Lower lobe of right lung (tissue), 2 donors: ENCODE measurements at regions of chr15 and their contacts with region 1.

Region 1: GRCh38 chr15:49122541-49123062 is 32.8 kb downstream of the COPS2 start:
- DNase-seq: no peak
- ATAC-seq: peak; percentile 34 to 51
- H3K4me3 ChIP-seq: no peak overlapping the region
- H3K27ac ChIP-seq: no peak overlapping the region
- H3K4me1 ChIP-seq: no peaks in the 10 kb centered on the region
- H3K27me3 ChIP-seq: no peaks in the 10 kb centered on the region
- CTCF ChIP-seq: no peak

Region 2: GRCh38 chr15:48963524-48964113 is 159.0 kb before region 1 on chr15 and contains the start of gene SHC4:
- intact Hi-C with region 1: no loop called
- DNase-seq: no peak
- ATAC-seq: peak; percentile 61 to 69
- H3K4me3 ChIP-seq: peak within 1 kb of the TSS; percentile 55
- H3K27ac ChIP-seq: no peak within 1 kb of the TSS
- H3K4me1 ChIP-seq: peaks cover 23% of the 10 kb centered on the region
- H3K27me3 ChIP-seq: peaks cover 32% of the 10 kb centered on the region
- CTCF ChIP-seq: no peak
- total RNA-seq, gene SHC4: 0.68 TPM

Region 3: DNA sequence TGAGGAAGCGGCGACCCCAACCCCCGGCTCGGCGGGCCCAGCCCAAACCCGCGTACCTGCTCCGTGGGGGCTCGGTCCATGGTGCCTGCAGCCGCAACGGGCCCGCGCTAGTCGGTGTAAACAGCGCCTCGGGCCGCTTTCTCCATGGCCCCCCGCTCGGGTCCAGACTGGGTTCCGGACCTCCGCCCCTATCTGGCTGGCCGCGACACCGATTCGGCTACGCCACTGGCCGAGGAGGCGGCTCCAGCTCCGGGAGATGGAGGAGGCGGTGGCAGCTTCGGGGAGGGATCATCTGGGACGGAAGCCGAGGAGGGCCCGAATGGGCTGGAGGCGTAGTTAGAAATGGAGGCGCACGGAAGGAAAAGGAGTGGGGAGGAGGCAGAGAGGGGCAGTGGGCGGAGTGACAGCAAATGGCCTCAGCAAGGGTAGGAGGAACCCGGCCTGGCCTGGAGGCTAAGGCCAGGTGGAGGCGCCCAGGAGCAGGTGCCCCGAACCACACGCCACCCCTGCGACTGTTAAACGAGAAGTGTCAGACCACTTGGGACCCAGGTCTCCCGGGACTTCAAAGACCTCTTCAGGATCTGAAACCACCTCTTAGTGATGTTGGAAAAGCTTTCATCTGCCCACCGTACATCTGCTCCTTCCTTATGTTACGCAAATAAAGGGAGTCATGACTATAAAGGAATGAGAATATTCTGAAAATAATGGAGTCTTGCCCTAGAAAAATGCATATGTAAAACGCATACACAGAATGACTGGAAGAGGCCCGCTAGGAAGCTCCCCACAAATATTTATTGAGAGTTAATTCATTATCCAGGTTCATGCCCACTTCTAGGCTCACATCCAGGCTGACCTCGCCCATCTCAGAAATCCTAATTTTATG is 76.1 kb before region 1 on chr15 and contains the start of gene SECISBP2L:
- intact Hi-C with region 1: loop called (anchors 10 kb)
- DNase-seq: peak; percentile 96
- ATAC-seq: peak; percentile 99
- H3K4me3 ChIP-seq: peak within 1 kb of the TSS; percentile 90
- H3K27ac ChIP-seq: peak within 1 kb of the TSS; percentile 92
- H3K4me1 ChIP-seq: peaks cover 35% of the 10 kb centered on the region
- H3K27me3 ChIP-seq: no peaks in the 10 kb centered on the region
- CTCF ChIP-seq: peak; percentile 39
- total RNA-seq, gene SECISBP2L: 139 TPM